CD8-positive, alpha-beta T cell (primary cell): ENCODE measurements at regions of chr2 and their contacts with region 1.

Region 1: GRCh38 chr2:177212106-177212890 is at the start of gene HNRNPA3:
- DNase-seq: peak; percentile 99 to 100 (median 100)
- ATAC-seq: peak; percentile 86
- H3K4me3 ChIP-seq: peak within 1 kb of the TSS; percentile 69 to 83
- H3K4me3 Mint-ChIP-seq: peak within 1 kb of the TSS; percentile 88
- H3K27ac ChIP-seq: peak within 1 kb of the TSS; percentile 99 to 100
- H3K27ac Mint-ChIP-seq: peak within 1 kb of the TSS; percentile 100
- H3K4me1 ChIP-seq: peaks cover 50% of the 10 kb centered on the region
- H3K4me1 Mint-ChIP-seq: peaks cover 51% of the 10 kb centered on the region
- H3K27me3 ChIP-seq: no peaks in the 10 kb centered on the region
- H3K27me3 Mint-ChIP-seq: no peaks in the 10 kb centered on the region
- CTCF ChIP-seq: no peak
- total RNA-seq, gene HNRNPA3: 144 to 160 TPM

Region 2: DNA sequence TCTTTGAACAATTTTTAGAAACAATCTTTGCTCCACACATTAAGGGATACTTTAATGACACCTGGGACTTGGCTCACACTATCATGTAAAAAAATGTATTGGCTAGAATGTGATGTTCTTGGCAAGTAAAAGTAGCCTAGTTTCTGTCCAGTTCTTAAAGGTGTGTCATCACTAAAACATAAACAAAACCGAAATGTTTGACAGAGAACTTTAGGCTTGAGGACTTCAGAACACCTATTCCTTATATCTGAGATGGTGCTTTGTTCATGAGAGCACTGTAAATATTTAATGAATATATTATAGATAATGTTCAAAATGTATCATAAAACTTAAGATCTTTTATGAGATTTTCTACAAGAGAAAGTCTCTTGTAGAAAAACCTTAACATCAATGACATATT is 19.5 kb before region 1 on chr2:
- CTCF ChIA-PET with region 1: no interaction called
- POLR2A ChIA-PET with region 1: no interaction called
- intact Hi-C with region 1: no loop called
- DNase-seq: no peak
- ATAC-seq: no peak
- H3K4me3 ChIP-seq: no peak overlapping the region
- H3K4me3 Mint-ChIP-seq: no peak overlapping the region
- H3K27ac ChIP-seq: no peak overlapping the region
- H3K27ac Mint-ChIP-seq: no peak overlapping the region
- H3K4me1 ChIP-seq: no peaks in the 10 kb centered on the region
- H3K4me1 Mint-ChIP-seq: no peaks in the 10 kb centered on the region
- H3K27me3 ChIP-seq: no peaks in the 10 kb centered on the region
- H3K27me3 Mint-ChIP-seq: no peaks in the 10 kb centered on the region
- CTCF ChIP-seq: no peak

Region 3: GRCh38 chr2:177229448-177230242 is 17.3 kb after region 1 on chr2:
- CTCF ChIA-PET with region 1: no interaction called
- POLR2A ChIA-PET with region 1: interaction called, 8 read pairs
- intact Hi-C with region 1: loop called (anchors 2 kb)
- DNase-seq: no peak
- ATAC-seq: no peak
- H3K4me3 ChIP-seq: no peak overlapping the region
- H3K4me3 Mint-ChIP-seq: no peak overlapping the region
- H3K27ac ChIP-seq: no peak overlapping the region
- H3K27ac Mint-ChIP-seq: peak overlapping the region; percentile 79
- H3K4me1 ChIP-seq: no peaks in the 10 kb centered on the region
- H3K4me1 Mint-ChIP-seq: peaks cover 41% of the 10 kb centered on the region
- H3K27me3 ChIP-seq: no peaks in the 10 kb centered on the region
- H3K27me3 Mint-ChIP-seq: no peaks in the 10 kb centered on the region
- CTCF ChIP-seq: no peak

Region 4: GRCh38 chr2:177392373-177393202 is 180.3 kb after region 1 on chr2 and contains the start of gene AGPS:
- CTCF ChIA-PET with region 1: no interaction called
- POLR2A ChIA-PET with region 1: no interaction called
- intact Hi-C with region 1: loop called in 1 of 2 experiments (anchors 2 kb)
- DNase-seq: peak; percentile 50 to 86 (median 70)
- ATAC-seq: peak; percentile 87
- H3K4me3 ChIP-seq: peak within 1 kb of the TSS; percentile 79 to 86
- H3K4me3 Mint-ChIP-seq: peak within 1 kb of the TSS; percentile 86
- H3K27ac ChIP-seq: peak within 1 kb of the TSS; percentile 55 to 62
- H3K27ac Mint-ChIP-seq: peak within 1 kb of the TSS; percentile 93
- H3K4me1 ChIP-seq: peaks cover 35% of the 10 kb centered on the region
- H3K4me1 Mint-ChIP-seq: peaks cover 59% of the 10 kb centered on the region
- H3K27me3 ChIP-seq: no peaks in the 10 kb centered on the region
- H3K27me3 Mint-ChIP-seq: no peaks in the 10 kb centered on the region
- CTCF ChIP-seq: no peak
- total RNA-seq, gene AGPS: 19.2 to 23.8 TPM

Region 5: DNA sequence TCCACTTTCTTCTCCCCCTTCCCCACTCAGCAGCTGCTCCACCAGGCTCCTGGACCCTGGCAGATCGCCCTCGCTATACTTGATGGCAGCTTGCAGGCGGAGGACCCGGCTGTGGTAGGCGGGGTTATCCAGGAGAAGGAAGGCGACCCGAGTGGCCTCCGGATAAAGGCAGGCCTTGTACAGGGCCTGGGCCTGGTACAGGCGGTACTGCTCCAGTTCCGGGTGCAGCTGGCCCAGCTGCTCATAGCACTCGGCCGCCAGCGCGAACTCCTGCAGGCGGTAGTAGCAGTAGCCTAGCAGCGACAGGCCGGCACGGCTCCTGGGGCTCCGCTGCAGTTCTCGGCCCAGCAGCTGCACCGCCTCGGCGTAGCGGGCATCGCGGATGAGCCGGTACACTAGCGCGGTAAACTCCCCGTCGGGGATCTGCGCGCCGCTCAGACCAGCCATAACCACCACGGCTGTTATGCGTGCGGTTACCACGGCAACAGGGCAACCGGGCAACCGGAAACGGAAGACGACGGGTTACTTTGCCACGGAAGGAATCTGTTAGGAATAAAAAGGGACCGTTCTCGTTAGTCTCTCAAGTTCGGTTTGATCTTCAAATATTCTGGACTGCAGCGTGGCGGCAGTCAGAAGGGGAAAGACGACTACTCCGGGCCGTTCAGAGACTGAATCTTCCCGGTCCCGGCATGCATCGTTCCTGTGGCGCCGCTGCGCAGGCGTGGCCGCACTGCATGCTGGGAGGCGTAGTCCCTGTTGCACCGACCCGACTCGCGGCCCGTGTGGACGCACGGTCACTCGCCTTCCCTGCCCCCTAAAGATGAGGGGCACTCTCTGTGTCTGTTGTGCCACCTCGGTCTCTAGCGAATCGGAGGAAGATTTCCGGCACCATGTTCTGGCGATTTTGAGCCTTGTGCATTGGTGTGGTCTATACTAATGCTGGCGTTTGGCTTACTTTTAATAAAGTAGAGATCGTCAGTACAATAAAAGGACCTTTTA is 406.3 kb after region 1 on chr2:
- CTCF ChIA-PET with region 1: no interaction called
- POLR2A ChIA-PET with region 1: no interaction called
- intact Hi-C with region 1: loop called in 1 of 2 experiments (anchors 1 kb)
- DNase-seq: peak; percentile 80 to 96 (median 91)
- ATAC-seq: peak; percentile 89
- H3K4me3 ChIP-seq: peak overlapping the region; percentile 89 to 93
- H3K4me3 Mint-ChIP-seq: peak overlapping the region; percentile 97
- H3K27ac ChIP-seq: peak overlapping the region; percentile 97 to 99
- H3K27ac Mint-ChIP-seq: peak overlapping the region; percentile 98
- H3K4me1 ChIP-seq: peaks cover 8% of the 10 kb centered on the region
- H3K4me1 Mint-ChIP-seq: peaks cover 7% of the 10 kb centered on the region
- H3K27me3 ChIP-seq: no peaks in the 10 kb centered on the region
- H3K27me3 Mint-ChIP-seq: no peaks in the 10 kb centered on the region
- CTCF ChIP-seq: no peak